Mammary epithelial cell (primary cell): ENCODE measurements at regions of chr10 and their contacts with region 1.

Region 1: DNA sequence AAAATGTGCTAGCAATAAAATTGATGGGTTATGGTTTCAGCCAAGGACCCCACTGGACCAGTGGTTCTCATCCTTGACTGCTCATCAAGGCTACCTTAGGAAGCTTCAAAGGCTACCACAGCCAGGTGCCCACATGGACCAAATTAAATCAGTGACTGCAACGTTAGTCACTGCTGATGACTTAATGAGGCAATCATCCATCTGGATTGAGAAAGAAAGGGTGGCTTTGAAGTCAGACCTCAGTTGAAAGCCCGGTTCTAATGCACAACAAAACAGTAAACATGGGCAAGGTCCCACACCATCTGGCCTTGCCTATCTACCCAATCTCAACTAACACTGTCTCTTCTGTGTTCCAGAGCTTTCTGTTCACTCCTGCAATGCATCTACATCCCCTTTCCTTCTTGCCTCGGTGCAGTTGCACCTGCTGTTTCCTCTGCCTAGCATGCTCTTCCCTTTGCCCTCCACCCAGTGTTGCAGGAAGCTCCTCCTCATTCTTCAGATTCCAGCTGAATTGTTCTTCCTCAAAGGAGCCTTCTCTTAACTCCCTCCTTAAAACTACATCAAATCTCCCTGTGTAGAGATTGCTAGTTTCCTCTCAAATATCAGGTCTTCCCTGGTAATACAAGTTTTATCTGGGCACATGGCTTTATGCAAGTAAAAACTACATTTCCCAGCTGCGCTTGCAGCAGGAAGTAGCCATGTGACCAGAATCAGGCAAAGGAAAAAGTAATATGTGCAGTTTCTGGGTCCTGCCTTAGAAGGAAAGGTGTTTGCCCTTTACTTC is 10.3 kb upstream of the KCNK18 start:
- DNase-seq: peak; percentile 87
- H3K4me3 ChIP-seq: no peak overlapping the region
- H3K27ac ChIP-seq: no peak overlapping the region
- H3K4me1 ChIP-seq: peaks cover 21% of the 10 kb centered on the region
- H3K27me3 ChIP-seq: no peaks in the 10 kb centered on the region
- CTCF ChIP-seq: no peak

Region 2: DNA sequence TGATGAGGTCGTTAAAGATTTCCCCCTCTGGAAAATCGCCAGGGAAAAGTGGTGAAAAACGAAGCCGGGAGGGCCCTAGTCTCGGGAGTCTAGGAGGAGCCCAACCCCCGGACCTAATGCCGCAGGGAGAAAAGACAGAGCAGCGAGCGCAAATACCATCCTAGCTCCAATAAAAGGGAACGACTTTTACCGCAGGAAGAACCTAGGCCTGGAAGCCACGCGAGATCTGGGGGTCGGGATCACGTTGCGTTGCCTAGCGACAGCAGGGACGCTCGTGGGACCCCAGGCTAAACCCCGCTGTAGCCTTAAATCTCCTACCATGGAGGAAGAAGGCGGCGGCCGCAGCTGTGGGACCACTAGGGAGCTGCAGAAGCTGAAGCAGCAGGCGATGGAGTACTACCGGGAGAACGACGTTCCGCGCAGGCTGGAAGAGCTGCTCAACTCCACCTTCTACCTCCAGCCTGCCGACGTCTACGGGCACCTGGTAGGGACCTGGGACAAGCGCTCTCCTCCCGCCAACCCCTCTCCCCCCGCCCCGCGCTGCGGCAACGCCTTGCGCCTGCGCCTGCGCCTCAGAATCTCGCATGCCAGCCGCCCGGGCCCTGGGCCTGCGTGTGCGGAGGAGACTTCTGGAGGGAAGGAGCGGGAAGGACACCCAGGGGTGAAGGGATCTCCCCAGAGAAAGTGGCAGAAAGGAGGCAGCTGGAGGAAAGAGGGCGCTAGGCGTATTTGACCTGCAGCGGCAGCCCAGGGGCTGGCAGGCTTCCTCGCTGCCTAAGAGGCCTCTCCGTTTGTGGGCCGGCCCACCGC is 337.6 kb before region 1 on chr10 and contains the start of gene ENO4:
- CTCF ChIA-PET with region 1: no interaction called
- dilution Hi-C with region 1: no loop called
- in situ Hi-C with region 1: no loop called
- intact Hi-C with region 1: loop called (anchors 2 kb)
- DNase-seq: peak; percentile 80
- H3K4me3 ChIP-seq: peak within 1 kb of the TSS; percentile 72 to 82 (median 77)
- H3K27ac ChIP-seq: peak within 1 kb of the TSS; percentile 49
- H3K4me1 ChIP-seq: peaks cover 24% of the 10 kb centered on the region
- H3K27me3 ChIP-seq: no peaks in the 10 kb centered on the region
- CTCF ChIP-seq: no peak
- total RNA-seq, gene ENO4: not detected

Region 3: GRCh38 chr10:117264782-117265181 is 77.8 kb after region 1 on chr10:
- CTCF ChIA-PET with region 1: no interaction called
- dilution Hi-C with region 1: loop called (anchors 5 kb)
- in situ Hi-C with region 1: no loop called
- intact Hi-C with region 1: no loop called
- DNase-seq: no peak
- H3K4me3 ChIP-seq: no peak overlapping the region
- H3K27ac ChIP-seq: no peak overlapping the region
- H3K4me1 ChIP-seq: no peaks in the 10 kb centered on the region
- H3K27me3 ChIP-seq: peaks cover 3% of the 10 kb centered on the region
- CTCF ChIP-seq: no peak

Region 4: DNA sequence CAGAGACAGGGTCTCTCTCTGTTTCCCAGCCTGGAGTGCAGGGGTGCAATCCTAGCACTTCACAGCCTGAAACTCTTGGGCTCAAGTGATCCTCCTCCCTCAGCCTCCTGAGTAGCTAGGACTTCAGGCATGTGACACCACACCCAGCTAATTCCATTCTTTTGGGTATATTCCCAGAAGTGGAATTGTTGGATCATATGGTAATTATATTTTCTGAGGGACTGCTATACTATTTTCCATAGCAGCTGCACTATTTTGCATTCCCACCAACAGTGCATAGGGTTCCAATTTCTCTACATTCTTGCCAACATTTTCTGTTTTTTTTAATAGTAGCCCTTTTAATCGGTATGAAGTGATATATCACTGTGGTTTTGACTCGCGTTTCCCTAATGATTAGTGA is 889.7 kb after region 1 on chr10:
- CTCF ChIA-PET with region 1: no interaction called
- dilution Hi-C with region 1: no loop called
- in situ Hi-C with region 1: no loop called
- intact Hi-C with region 1: no loop called
- DNase-seq: no peak
- H3K4me3 ChIP-seq: no peak overlapping the region
- H3K27ac ChIP-seq: no peak overlapping the region
- H3K4me1 ChIP-seq: no peaks in the 10 kb centered on the region
- H3K27me3 ChIP-seq: no peaks in the 10 kb centered on the region
- CTCF ChIP-seq: no peak